Tibial artery (tissue), 4 donors: ENCODE measurements at regions of chr6 and their contacts with region 1.

Region 1: GRCh38 chr6:113994918-113995342 is 24.0 kb upstream of the HDAC2 start:
- DNase-seq: no peak
- H3K4me3 ChIP-seq: no peak overlapping the region
- H3K27ac ChIP-seq: peak overlapping the region in 1 of 2 donors; percentile 58
- H3K4me1 ChIP-seq: peaks cover 7 to 41% (median 20%) of the 10 kb centered on the region in 4 donors
- H3K27me3 ChIP-seq: no peaks in the 10 kb centered on the region
- CTCF ChIP-seq: peak; percentile 32 to 42

Region 2: GRCh38 chr6:113909234-113909856 is 85.6 kb before region 1 on chr6:
- intact Hi-C with region 1: no loop called
- DNase-seq: no peak
- H3K4me3 ChIP-seq: no peak overlapping the region
- H3K27ac ChIP-seq: no peak overlapping the region
- H3K4me1 ChIP-seq: peaks cover 0 to 4% (median under 1%) of the 10 kb centered on the region in 4 donors
- H3K27me3 ChIP-seq: no peaks in the 10 kb centered on the region
- CTCF ChIP-seq: peak; percentile 61 to 75

Region 3: GRCh38 chr6:113970805-113971676 is 23.9 kb before region 1 on chr6 and contains the start of gene HDAC2:
- intact Hi-C with region 1: loop called (anchors 1 kb)
- DNase-seq: peak; percentile 68 to 87
- H3K4me3 ChIP-seq: peak within 1 kb of the TSS; percentile 85 to 99
- H3K27ac ChIP-seq: peak within 1 kb of the TSS; percentile 90 to 96
- H3K4me1 ChIP-seq: peaks cover 0 to 36% (median 24%) of the 10 kb centered on the region in 4 donors
- H3K27me3 ChIP-seq: no peaks in the 10 kb centered on the region
- CTCF ChIP-seq: no peak

Region 4: DNA sequence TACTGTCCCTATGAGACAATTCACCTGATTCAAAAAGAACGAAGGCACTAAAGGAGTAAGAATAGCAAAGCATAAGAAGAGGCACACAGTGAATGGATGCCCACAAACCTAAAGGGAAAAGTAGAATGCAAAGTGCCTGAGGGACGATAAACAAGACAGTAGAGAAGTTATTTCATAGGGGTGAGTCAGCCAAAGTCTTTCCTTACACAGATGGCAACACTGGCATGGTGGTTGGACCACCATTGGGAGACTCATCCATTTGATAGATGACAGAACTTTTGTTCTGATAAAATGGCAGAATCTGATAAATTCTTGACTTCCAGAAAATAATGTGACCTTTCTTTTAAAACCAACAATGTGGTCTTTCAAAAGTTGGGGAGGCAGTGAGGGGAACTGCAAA is 124.1 kb after region 1 on chr6:
- intact Hi-C with region 1: loop called (anchors 10 kb)
- DNase-seq: no peak
- H3K4me3 ChIP-seq: no peak overlapping the region
- H3K27ac ChIP-seq: no peak overlapping the region
- H3K4me1 ChIP-seq: no peaks in the 10 kb centered on the region
- H3K27me3 ChIP-seq: no peaks in the 10 kb centered on the region
- CTCF ChIP-seq: no peak